ENCODE measurements at regions of chr1 and their contacts with region 1.

Region 1: GRCh38 chr1:181033799-181034451 is at the start of gene MR1:
- DNase-seq: peak; percentile 71
- ATAC-seq: peak; percentile 97
- H3K4me3 Mint-ChIP-seq: peak within 1 kb of the TSS; percentile 97
- H3K27ac Mint-ChIP-seq: peak within 1 kb of the TSS; percentile 97
- H3K4me1 Mint-ChIP-seq: peaks cover 55% of the 10 kb centered on the region
- H3K27me3 Mint-ChIP-seq: no peaks in the 10 kb centered on the region
- total RNA-seq, gene MR1: 27.9 to 29.3 TPM

Region 2: GRCh38 chr1:180954005-180954800 is 79.7 kb before region 1 on chr1:
- CTCF ChIA-PET with region 1: no interaction called
- POLR2A ChIA-PET with region 1: no interaction called
- DNase-seq: peak; percentile 56
- ATAC-seq: peak; percentile 84
- H3K4me3 Mint-ChIP-seq: no peak overlapping the region
- H3K27ac Mint-ChIP-seq: no peak overlapping the region
- H3K4me1 Mint-ChIP-seq: peaks cover 5% of the 10 kb centered on the region
- H3K27me3 Mint-ChIP-seq: no peaks in the 10 kb centered on the region

Region 3: DNA sequence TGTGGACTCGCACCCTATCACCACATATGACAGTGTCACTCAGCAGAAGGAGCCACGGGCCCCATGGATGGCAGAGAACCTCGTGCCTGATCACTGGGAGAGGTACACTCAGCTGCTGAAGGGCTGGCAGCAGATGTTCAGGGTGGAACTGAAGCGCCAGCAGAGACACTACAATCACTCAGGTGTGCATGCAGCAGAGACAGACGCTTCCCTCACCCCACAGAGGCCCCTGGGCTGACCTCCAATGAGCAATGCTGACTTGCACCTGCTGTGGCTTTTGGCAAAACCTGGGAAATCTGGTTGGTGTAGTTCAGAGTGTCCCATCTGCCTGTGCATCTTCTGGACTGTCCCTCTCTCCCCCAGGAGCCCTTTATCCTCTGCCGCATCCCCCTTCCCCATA is 69.3 kb before region 1 on chr1:
- CTCF ChIA-PET with region 1: no interaction called
- POLR2A ChIA-PET with region 1: no interaction called
- DNase-seq: no peak
- ATAC-seq: no peak
- H3K4me3 Mint-ChIP-seq: no peak overlapping the region
- H3K27ac Mint-ChIP-seq: no peak overlapping the region
- H3K4me1 Mint-ChIP-seq: no peaks in the 10 kb centered on the region
- H3K27me3 Mint-ChIP-seq: no peaks in the 10 kb centered on the region

Region 4: GRCh38 chr1:181021811-181022434 is 12.0 kb before region 1 on chr1:
- CTCF ChIA-PET with region 1: interaction called, 16 read pairs
- POLR2A ChIA-PET with region 1: interaction called, 52 read pairs
- DNase-seq: peak; percentile 72
- ATAC-seq: peak; percentile 38
- H3K4me3 Mint-ChIP-seq: peak overlapping the region; percentile 93
- H3K27ac Mint-ChIP-seq: peak overlapping the region; percentile 93
- H3K4me1 Mint-ChIP-seq: peaks cover 51% of the 10 kb centered on the region
- H3K27me3 Mint-ChIP-seq: peaks cover 18% of the 10 kb centered on the region

Region 5: GRCh38 chr1:181056560-181056959 is 22.6 kb after region 1 on chr1:
- CTCF ChIA-PET with region 1: interaction called, 13 read pairs
- POLR2A ChIA-PET with region 1: no interaction called
- DNase-seq: no peak
- ATAC-seq: no peak
- H3K4me3 Mint-ChIP-seq: no peak overlapping the region
- H3K27ac Mint-ChIP-seq: no peak overlapping the region
- H3K4me1 Mint-ChIP-seq: no peaks in the 10 kb centered on the region
- H3K27me3 Mint-ChIP-seq: no peaks in the 10 kb centered on the region

Region 6: DNA sequence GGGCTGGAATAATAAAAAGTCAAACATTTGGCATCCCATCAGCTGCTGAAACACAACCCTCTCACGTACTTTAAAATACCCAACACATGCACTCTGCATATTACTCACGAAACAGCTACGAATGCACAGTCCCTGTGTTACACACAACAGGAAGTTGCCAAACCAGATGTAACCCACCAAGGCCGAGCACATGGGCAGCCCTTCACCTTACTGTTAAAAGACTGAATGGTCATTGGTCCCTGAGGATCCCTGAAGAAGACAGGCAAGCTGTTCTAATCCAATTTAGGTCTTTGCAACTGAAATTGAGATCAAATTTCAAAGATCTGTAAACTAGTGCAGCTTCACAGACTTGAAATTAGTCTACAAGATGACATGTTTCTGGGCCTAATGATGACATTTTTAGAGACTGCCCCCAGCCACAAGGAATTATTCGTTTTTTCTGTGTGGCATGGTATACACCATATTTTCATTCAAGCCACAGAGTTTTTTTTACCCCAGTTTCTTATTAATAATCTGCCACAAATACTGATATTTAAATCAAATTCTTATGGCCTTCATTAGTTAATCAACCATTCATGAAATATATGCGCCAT is 29.0 kb after region 1 on chr1:
- CTCF ChIA-PET with region 1: interaction called, 12 read pairs
- POLR2A ChIA-PET with region 1: interaction called, 5 read pairs
- DNase-seq: peak; percentile 69
- ATAC-seq: peak; percentile 89
- H3K4me3 Mint-ChIP-seq: peak overlapping the region; percentile 60
- H3K27ac Mint-ChIP-seq: peak overlapping the region; percentile 94
- H3K4me1 Mint-ChIP-seq: peaks cover 22% of the 10 kb centered on the region
- H3K27me3 Mint-ChIP-seq: no peaks in the 10 kb centered on the region

Region 7: DNA sequence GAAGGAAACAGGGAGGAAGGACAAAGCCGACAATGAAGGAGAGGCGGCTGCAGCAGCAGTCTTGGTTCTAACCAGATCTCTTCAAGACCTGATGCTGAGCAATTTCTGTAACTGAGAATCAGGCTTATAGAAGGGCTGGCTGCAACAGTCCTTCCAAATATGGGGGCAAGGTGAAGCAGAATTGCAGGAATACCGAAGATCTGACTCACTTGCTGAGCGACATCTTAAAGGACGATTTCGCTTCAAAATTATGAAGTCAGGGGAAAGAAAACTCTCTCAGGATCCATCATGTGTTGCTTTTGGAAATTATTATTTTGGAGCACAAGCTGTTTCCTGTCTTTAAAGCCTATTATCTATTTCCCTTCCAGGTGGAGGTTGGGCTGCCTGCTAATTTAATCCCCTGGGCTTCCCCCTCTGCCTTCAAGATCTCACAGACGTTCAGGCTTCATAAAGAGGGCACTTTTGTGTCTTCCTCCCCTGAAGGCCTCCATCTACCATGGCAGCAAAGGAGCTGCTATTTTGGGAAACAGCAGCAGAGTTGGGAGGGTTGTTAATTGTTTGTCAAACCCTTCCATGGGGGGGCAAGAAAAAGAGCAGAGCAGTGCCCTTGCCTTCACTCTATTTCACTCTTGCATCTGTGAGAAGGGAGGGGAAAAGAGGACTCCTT is 43.8 kb after region 1 on chr1:
- CTCF ChIA-PET with region 1: interaction called, 12 read pairs
- POLR2A ChIA-PET with region 1: interaction called, 4 read pairs
- DNase-seq: no peak
- ATAC-seq: no peak
- H3K4me3 Mint-ChIP-seq: no peak overlapping the region
- H3K27ac Mint-ChIP-seq: no peak overlapping the region
- H3K4me1 Mint-ChIP-seq: peaks cover 5% of the 10 kb centered on the region
- H3K27me3 Mint-ChIP-seq: peaks cover 21% of the 10 kb centered on the region

Measured in activated CD8-positive, alpha-beta T cell treated with anti-CD3 and anti-CD28 coated beads, Interleukin-2, amount 10 ng/mL, durations not matched to agents 7 days and 5 days (primary cell).